ENCODE measurements at regions of chr12 and their contacts with region 1.

Region 1: DNA sequence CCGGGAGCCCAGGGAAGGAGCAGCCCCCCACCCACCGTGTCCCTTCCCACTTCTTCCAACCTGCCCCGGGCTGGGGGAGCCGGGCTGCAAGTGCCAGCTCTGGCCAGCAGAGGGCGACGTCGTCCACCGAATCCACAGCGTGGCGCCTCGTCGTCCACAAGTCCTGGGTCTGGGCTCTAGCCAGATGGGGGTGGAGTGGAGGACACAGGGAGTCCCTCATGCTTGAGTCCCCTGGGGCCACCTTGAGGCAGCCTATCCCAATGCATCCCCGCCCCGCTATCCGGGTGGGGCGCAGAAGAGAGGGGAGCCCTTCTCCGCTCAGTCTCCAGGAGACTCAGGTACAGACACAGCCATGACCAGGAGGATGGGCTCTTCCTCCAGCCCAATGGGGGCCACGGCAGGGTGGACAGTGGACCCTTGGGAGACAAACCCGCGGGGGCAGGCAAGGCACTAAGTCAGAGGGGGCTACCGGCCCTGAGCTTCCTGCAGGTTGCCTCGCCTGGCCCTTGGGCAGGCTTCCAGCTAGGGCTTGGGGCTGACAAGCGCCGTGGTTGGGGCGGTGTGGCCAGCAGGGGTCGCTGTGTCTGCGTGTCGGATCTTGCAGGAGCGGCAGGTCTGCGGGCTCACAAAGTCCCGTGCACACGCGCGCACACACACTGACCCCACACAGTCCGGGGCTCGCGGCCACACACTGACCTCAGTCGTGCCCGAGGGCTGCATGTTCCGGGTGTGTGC is 5.5 kb downstream of the AQP5 start:
- DNase-seq: peak; percentile 95
- H3K4me3 Mint-ChIP-seq: peak overlapping the region; percentile 47
- H3K27ac Mint-ChIP-seq: no peak overlapping the region
- H3K4me1 Mint-ChIP-seq: peaks cover 4% of the 10 kb centered on the region
- H3K27me3 Mint-ChIP-seq: no peaks in the 10 kb centered on the region

Region 2: GRCh38 chr12:49866859-49867579 is 100.2 kb before region 1 on chr12:
- CTCF ChIA-PET with region 1: interaction called, 25 read pairs
- DNase-seq: peak; percentile 80
- H3K4me3 Mint-ChIP-seq: no peak overlapping the region
- H3K27ac Mint-ChIP-seq: no peak overlapping the region
- H3K4me1 Mint-ChIP-seq: no peaks in the 10 kb centered on the region
- H3K27me3 Mint-ChIP-seq: peaks cover 54% of the 10 kb centered on the region

Region 3: DNA sequence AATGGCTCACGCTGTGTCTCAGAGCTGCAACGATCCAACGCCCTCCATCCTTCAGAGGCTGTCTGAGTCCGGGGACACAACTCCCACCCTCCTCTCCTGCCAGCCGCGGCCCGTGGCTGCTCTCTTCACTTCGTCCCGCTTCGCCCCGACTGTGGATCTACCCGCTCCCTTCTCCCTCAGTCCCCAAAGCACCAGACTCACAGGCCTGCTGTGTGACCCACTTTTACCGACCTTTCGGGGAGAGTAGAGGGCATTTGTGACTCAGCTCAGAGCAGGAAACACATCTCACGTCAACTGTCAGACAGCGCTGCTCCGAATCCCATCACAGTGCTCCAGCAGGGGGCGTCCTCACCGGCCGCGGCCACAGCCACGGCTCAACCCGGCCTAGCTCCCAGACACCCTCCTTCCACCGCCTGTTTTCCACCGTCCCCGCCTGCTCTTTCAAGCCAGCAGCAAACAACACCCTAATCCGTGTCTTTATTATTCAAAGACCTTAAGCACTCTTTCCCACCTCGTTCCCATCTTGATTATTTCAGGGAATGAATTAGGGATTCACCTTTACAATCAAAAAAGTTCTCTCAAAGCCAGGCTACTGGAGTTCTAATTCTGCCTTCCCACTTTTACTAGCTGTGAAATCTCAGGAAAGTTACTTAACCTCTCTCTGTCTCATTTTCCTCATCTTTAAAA is 21.7 kb before region 1 on chr12:
- CTCF ChIA-PET with region 1: interaction called, 24 read pairs
- DNase-seq: peak; percentile 87
- H3K4me3 Mint-ChIP-seq: peak overlapping the region; percentile 74
- H3K27ac Mint-ChIP-seq: peak overlapping the region; percentile 87
- H3K4me1 Mint-ChIP-seq: peaks cover 41% of the 10 kb centered on the region
- H3K27me3 Mint-ChIP-seq: peaks cover 36% of the 10 kb centered on the region

Region 4: DNA sequence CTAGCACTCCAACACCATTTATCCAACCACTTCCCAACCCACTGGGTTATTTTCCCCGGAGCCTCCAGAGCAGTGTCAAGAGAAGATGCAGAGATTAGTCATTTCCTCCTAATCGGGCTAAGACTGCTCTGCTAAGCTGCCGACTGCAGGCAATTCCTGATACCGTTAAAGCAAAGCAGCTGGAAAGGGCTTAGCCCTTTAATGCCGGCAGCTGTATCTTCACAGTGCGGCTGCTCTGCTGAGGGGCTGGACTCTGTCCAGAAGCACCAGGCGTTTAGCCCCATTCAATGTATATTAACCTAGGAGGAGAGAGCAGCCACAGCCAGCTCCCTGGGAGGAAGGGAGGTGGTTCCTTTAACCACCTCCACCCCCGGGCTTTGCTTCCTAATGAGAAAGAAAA is 16.7 kb after region 1 on chr12:
- CTCF ChIA-PET with region 1: interaction called, 67 read pairs
- DNase-seq: no peak
- H3K4me3 Mint-ChIP-seq: no peak overlapping the region
- H3K27ac Mint-ChIP-seq: no peak overlapping the region
- H3K4me1 Mint-ChIP-seq: no peaks in the 10 kb centered on the region
- H3K27me3 Mint-ChIP-seq: no peaks in the 10 kb centered on the region

Region 5: DNA sequence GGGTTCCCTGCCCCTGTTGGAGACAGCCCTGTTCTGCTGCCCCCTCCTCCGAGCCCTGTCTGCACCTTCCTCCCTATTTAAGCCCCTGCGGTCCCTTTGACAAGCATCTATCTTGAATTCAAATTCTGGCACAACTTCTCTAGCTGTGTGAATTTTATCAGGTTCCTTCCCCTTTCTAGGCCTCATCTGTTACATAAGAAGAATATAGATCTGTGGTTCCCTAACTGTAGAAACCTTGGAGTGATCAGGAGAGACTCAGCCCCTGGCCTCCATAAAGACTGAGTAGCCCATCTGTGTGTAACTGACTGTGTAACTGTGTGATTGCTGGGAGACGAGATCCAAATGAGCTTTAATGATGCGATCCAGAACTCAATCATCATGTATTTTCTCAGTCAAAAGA is 71.1 kb after region 1 on chr12:
- CTCF ChIA-PET with region 1: interaction called, 16 read pairs
- DNase-seq: no peak
- H3K4me3 Mint-ChIP-seq: no peak overlapping the region
- H3K27ac Mint-ChIP-seq: no peak overlapping the region
- H3K4me1 Mint-ChIP-seq: peaks cover 2% of the 10 kb centered on the region
- H3K27me3 Mint-ChIP-seq: peaks cover 45% of the 10 kb centered on the region

Region 6: DNA sequence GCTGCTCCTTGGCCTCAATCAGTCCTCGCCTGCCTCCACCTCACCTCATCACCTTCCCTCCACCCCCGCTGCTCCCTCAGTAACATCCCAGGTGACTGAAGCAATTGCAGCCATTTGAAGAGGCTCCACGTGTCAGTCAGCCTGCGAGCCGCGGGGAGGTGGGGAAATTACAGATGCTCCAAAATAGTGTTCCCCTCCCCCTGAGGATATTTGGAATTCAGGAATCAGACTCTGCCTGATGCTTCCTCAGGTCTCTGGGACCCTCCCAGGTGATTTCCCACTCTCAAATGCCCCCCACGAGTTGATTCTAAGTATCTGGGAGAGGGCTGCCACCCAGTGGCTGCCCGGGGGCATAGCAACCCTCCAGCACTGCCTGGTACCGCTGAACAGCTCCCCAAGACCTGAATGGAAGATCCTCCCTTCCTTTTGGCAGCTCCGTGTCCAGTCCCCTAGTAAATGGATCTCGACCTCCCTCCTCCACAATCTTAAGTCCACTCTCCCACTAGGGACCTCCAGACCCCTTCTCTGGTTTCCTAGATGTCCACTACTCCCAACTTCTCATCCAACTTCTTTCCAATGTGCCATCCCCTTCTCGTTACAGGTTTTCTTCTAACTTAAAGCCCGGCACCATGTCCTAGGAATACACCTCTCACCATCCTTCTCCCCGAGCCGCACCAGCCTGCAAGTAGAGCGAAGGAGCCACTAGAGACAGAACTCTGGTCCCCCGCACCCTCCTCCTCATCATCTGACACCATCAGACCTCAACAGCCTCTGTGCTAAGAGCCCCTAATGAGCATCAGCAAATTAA is 88.8 kb after region 1 on chr12:
- CTCF ChIA-PET with region 1: interaction called, 58 read pairs
- DNase-seq: peak; percentile 72
- H3K4me3 Mint-ChIP-seq: peak overlapping the region; percentile 14
- H3K27ac Mint-ChIP-seq: no peak overlapping the region
- H3K4me1 Mint-ChIP-seq: peaks cover 36% of the 10 kb centered on the region
- H3K27me3 Mint-ChIP-seq: peaks cover 73% of the 10 kb centered on the region

Region 7: GRCh38 chr12:50074936-50075807 is 108.0 kb after region 1 on chr12:
- CTCF ChIA-PET with region 1: interaction called, 115 read pairs
- DNase-seq: peak; percentile 88
- H3K4me3 Mint-ChIP-seq: no peak overlapping the region
- H3K27ac Mint-ChIP-seq: no peak overlapping the region
- H3K4me1 Mint-ChIP-seq: peaks cover 7% of the 10 kb centered on the region
- H3K27me3 Mint-ChIP-seq: peaks cover 41% of the 10 kb centered on the region